WTC11 (cell line): ENCODE measurements at regions of chr11 and their contacts with region 1.

Region 1: DNA sequence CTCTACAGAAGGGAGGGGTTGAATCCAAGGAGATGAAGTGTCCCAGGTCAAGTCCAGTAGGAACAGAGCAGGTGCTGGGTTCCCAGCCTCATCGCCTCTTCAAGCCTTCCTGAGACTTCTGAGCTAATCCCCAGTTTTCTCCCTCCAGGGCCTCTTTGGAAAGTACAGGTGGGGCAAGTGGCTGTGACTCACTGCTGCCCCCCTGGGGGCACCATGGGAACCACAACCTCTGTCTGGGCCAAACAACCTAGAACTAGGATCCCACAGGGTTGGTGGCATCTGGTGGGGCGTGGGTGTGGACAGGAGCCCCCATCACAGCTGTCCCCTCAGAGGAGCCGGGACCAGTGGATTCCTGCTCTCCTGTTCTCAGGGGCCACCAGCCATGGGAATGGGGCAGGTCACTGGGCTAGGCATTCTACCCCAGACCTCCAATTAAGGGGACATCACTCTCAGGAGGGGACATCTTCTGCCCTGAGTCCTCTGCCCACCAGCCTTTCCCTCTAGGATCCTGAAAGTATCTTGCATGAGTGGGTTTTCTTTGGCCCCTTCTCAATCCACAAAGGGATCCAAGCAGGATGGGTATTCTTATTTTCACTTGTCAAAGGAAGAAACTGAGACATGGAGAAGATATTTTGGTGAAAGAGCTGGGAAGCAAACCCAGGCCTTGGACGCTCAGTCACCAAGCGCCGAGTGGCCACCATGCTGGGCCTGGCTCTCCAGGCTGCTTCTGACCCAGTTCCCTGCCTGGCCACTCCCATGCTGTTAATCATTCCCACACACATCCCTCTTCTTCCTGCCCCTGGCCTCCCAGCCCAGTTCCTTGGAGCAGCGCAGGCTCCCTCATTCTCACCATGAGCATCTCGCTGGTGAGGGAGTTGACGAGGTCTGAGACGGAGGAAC is 23.8 kb downstream of the LRRC10B start:
- DNase-seq: peak; percentile 77
- ATAC-seq: peak; percentile 85
- H3K4me3 Mint-ChIP-seq: no peak overlapping the region
- H3K27ac Mint-ChIP-seq: no peak overlapping the region
- H3K4me1 Mint-ChIP-seq: peaks cover 10% of the 10 kb centered on the region
- H3K27me3 Mint-ChIP-seq: no peaks in the 10 kb centered on the region
- CTCF ChIP-seq: peak; percentile 98

Region 2: GRCh38 chr11:61187505-61188130 is 344.8 kb before region 1 on chr11:
- CTCF ChIA-PET with region 1: no interaction called
- POLR2A ChIA-PET with region 1: no interaction called
- DNase-seq: peak; percentile 90
- ATAC-seq: peak; percentile 93
- H3K4me3 Mint-ChIP-seq: no peak overlapping the region
- H3K27ac Mint-ChIP-seq: no peak overlapping the region
- H3K4me1 Mint-ChIP-seq: no peaks in the 10 kb centered on the region
- H3K27me3 Mint-ChIP-seq: no peaks in the 10 kb centered on the region
- CTCF ChIP-seq: peak; percentile 95

Region 3: DNA sequence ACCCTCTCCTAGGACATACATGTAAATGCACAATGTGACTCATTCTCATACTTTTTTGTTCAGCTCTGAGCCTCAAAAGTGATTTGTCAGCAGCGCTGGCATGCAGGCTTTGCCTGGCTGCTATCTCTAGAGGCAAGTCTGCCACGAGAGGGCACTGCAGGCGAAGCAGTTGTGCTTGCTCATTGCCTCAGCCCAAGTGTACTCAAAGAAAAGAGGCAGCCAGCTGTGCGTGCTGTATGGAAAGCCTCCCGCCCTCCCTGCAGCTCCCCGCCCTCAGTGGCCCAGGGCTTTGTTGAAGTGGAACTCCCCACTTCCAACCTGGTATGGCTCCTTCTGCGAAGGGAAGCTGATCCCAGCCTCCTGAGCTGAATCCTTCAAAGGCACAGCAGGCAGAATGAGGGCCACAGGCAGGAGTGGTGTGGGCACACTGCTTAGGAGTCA is 86.2 kb before region 1 on chr11:
- CTCF ChIA-PET with region 1: interaction called, 34 read pairs
- POLR2A ChIA-PET with region 1: no interaction called
- DNase-seq: peak; percentile 95
- ATAC-seq: peak; percentile 93
- H3K4me3 Mint-ChIP-seq: no peak overlapping the region
- H3K27ac Mint-ChIP-seq: peak overlapping the region; percentile 82; the same call in 1 of the 2 replicates
- H3K4me1 Mint-ChIP-seq: no peaks in the 10 kb centered on the region
- H3K27me3 Mint-ChIP-seq: no peaks in the 10 kb centered on the region
- CTCF ChIP-seq: peak; percentile 47

Region 4: DNA sequence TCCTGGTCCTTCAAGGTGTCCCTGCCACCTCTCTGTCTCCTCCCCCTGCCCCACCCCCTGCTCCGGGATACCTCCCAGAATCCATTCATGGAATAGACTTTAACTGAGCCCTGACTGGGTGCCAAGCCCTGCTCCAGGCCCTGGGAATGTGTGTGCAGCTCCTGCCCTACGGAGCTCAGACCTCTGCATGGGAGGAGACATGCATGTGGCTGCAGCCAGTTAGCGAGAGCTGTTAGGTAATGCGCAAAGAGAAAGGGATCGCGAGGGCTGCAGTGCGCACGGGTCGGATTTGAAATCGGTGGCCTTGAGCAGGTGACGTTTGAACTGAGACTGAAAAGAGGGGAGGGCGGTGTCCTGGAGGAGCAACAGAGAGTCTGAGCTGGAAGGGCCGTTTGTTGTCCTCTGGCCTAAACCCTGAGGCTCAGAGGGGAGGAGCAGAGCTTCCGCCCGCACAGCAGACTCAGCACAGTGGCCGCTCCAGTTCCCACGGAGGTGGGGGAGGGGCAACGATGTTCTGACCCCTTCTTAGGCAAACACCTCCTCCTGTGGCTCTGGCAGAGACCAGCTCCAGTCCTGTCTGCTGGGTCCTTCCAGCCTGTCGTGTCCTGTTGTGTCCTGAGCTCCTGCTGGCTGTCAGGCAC is 43.6 kb before region 1 on chr11:
- CTCF ChIA-PET with region 1: interaction called, 82 read pairs
- POLR2A ChIA-PET with region 1: no interaction called
- DNase-seq: peak; percentile 76
- ATAC-seq: peak; percentile 60
- H3K4me3 Mint-ChIP-seq: peak overlapping the region; percentile 50
- H3K27ac Mint-ChIP-seq: peak overlapping the region; percentile 95
- H3K4me1 Mint-ChIP-seq: peaks cover 42% of the 10 kb centered on the region
- H3K27me3 Mint-ChIP-seq: peaks cover 7% of the 10 kb centered on the region; the same call in 1 of the 2 replicates
- CTCF ChIP-seq: no peak

Region 5: GRCh38 chr11:61555051-61555969 is 22.9 kb after region 1 on chr11:
- CTCF ChIA-PET with region 1: interaction called, 174 read pairs
- POLR2A ChIA-PET with region 1: no interaction called
- DNase-seq: peak; percentile 66
- ATAC-seq: peak; percentile 64
- H3K4me3 Mint-ChIP-seq: peak overlapping the region; percentile 70
- H3K27ac Mint-ChIP-seq: no peak overlapping the region
- H3K4me1 Mint-ChIP-seq: peaks cover 39% of the 10 kb centered on the region
- H3K27me3 Mint-ChIP-seq: peaks cover 30% of the 10 kb centered on the region
- CTCF ChIP-seq: peak; percentile 49; the same call in 1 of the 2 replicates

Region 6: GRCh38 chr11:61587521-61588453 is 55.4 kb after region 1 on chr11:
- CTCF ChIA-PET with region 1: interaction called, 22 read pairs
- POLR2A ChIA-PET with region 1: interaction called, 3 read pairs
- DNase-seq: peak; percentile 96
- ATAC-seq: peak; percentile 80
- H3K4me3 Mint-ChIP-seq: peak overlapping the region; percentile 74
- H3K27ac Mint-ChIP-seq: no peak overlapping the region
- H3K4me1 Mint-ChIP-seq: peaks cover 34% of the 10 kb centered on the region
- H3K27me3 Mint-ChIP-seq: peaks cover 59% of the 10 kb centered on the region
- CTCF ChIP-seq: no peak

Region 7: GRCh38 chr11:61627567-61628445 is 95.4 kb after region 1 on chr11:
- CTCF ChIA-PET with region 1: interaction called, 36 read pairs
- POLR2A ChIA-PET with region 1: interaction called, 3 read pairs
- DNase-seq: peak; percentile 87
- ATAC-seq: peak; percentile 79
- H3K4me3 Mint-ChIP-seq: no peak overlapping the region
- H3K27ac Mint-ChIP-seq: peak overlapping the region; percentile 70
- H3K4me1 Mint-ChIP-seq: peaks cover 50% of the 10 kb centered on the region
- H3K27me3 Mint-ChIP-seq: no peaks in the 10 kb centered on the region
- CTCF ChIP-seq: peak; percentile 92